Calu3 (cell line): ENCODE measurements at regions of chr10 and their contacts with region 1.

Region 1: GRCh38 chr10:58641095-58641531 is 128.4 kb downstream of the BICC1 start:
- DNase-seq: peak; percentile 46
- H3K4me3 Mint-ChIP-seq: peak overlapping the region; percentile 29
- H3K27ac Mint-ChIP-seq: peak overlapping the region; percentile 43
- H3K4me1 Mint-ChIP-seq: peaks cover 78% of the 10 kb centered on the region
- H3K27me3 Mint-ChIP-seq: no peaks in the 10 kb centered on the region
- CTCF ChIP-seq: no peak

Region 2: GRCh38 chr10:58414270-58415041 is 226.7 kb before region 1 on chr10:
- CTCF ChIA-PET with region 1: interaction called, 10 read pairs
- intact Hi-C with region 1: loop called (anchors 2 kb)
- DNase-seq: peak; percentile 63
- H3K4me3 Mint-ChIP-seq: no peak overlapping the region
- H3K27ac Mint-ChIP-seq: no peak overlapping the region
- H3K4me1 Mint-ChIP-seq: peaks cover 32% of the 10 kb centered on the region
- H3K27me3 Mint-ChIP-seq: no peaks in the 10 kb centered on the region
- CTCF ChIP-seq: peak; percentile 71

Region 3: DNA sequence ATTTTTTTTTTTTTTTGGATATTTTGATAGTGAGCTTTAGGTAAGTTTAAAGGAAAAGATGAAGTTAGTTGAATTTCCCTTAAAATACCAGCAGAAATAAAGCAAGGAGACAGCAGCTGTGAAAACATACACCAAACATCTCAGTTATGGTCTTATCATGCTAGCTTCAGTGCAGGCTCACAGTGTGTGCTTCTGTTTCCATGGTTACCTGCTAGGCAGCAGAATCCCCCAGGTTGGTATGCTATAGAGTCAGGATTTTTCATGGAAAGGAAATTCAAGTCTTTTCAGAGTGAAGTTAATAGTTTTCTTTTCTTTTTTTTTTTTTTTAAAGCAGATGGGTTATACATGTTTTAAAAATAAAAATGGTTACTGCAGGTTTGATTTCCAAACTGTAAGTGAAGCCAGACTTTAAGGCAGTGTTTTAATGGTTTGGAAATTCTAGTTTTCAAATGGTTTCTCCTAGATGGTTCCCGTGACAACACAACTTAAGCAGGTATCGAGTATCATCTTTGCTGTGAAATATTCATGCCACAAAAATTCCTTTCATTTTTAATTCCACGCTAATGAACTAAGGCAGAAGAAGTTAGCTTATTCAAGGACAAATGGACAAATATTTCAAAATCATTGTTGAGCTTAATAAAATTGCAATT is 102.5 kb after region 1 on chr10:
- CTCF ChIA-PET with region 1: no interaction called
- intact Hi-C with region 1: loop called (anchors 5 kb)
- DNase-seq: no peak
- H3K4me3 Mint-ChIP-seq: no peak overlapping the region
- H3K27ac Mint-ChIP-seq: no peak overlapping the region
- H3K4me1 Mint-ChIP-seq: peaks cover 20% of the 10 kb centered on the region
- H3K27me3 Mint-ChIP-seq: no peaks in the 10 kb centered on the region
- CTCF ChIP-seq: no peak

Region 4: DNA sequence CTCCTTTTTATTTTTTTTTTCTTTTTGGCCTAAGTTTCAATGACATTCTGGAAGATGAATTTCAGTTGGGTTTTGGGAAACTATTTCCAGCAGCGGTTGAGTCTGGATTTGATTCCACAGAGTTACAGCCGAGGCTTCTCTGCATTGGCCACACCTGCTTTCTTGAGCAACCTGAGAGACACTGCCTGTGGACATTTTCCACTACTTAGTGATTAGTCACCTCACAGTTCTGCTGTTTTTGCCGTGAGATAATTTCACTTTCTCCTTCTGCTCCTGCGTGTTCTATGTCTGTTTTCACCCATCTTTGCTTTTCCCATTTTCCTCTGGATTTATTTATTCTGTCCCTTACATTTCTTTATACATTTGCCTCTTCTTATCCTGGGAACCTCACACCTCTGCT is 114.6 kb after region 1 on chr10:
- CTCF ChIA-PET with region 1: no interaction called
- intact Hi-C with region 1: loop called (anchors 5 kb)
- DNase-seq: peak; percentile 49
- H3K4me3 Mint-ChIP-seq: peak overlapping the region; percentile 60
- H3K27ac Mint-ChIP-seq: peak overlapping the region; percentile 35
- H3K4me1 Mint-ChIP-seq: peaks cover 53% of the 10 kb centered on the region
- H3K27me3 Mint-ChIP-seq: no peaks in the 10 kb centered on the region
- CTCF ChIP-seq: no peak